ENCODE measurements at regions of chr6 and their contacts with region 1.

Region 1: GRCh38 chr6:108113557-108114519 is 39.3 kb upstream of the OSTM1 start:
- DNase-seq: peak; percentile 80
- H3K4me3 ChIP-seq: peak overlapping the region; percentile 37
- H3K27ac ChIP-seq: no peak overlapping the region
- H3K4me1 ChIP-seq: peaks cover 29% of the 10 kb centered on the region
- H3K27me3 ChIP-seq: peaks cover 80% of the 10 kb centered on the region
- CTCF ChIP-seq: peak; percentile 68

Region 2: DNA sequence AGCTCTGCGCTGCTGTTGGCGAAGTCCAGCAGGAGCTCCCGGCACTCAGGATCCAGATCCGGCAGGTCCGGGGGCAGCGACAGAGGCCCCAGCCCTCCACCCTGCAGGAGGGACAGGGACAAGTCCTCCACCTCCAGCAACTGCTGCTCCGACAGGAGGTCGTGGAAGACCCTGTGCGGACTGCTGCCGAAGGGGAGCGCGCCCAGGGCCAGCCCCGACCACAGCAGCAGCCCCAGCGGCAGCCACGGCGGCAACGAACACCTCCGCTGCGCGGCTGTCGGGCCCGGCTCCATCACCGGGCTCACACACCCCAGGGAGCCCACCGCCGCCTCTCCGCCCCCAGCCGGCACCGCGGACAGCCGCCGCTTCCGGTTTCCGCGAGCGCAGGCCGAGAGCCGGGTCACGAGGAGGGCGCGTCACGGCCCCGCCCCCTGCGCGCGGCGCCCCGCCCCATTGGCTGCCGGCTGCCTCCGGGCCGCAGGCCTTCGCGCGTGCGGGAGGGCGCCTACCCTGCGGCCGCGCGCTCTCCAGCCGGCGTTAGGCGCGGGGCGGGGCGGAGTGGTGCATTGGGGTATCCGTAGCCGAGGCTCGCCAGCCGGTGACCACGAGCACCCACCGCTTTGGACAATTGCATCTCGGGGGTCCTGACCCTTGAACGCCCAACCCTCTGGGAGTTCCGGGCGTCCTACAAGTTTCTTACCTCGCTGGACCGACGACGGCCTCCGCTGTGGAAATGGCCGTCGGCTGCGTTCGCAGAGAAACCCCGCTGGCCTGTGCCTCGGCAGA is 39.3 kb before region 1 on chr6 and contains the start of gene OSTM1:
- CTCF ChIA-PET with region 1: no interaction called
- POLR2A ChIA-PET with region 1: no interaction called
- intact Hi-C with region 1: loop called (anchors 1 kb)
- DNase-seq: peak; percentile 88
- H3K4me3 ChIP-seq: peak within 1 kb of the TSS; percentile 94
- H3K27ac ChIP-seq: peak within 1 kb of the TSS; percentile 33
- H3K4me1 ChIP-seq: no peaks in the 10 kb centered on the region
- H3K27me3 ChIP-seq: no peaks in the 10 kb centered on the region
- CTCF ChIP-seq: no peak
- total RNA-seq, gene OSTM1: 19.7 and 23.8 TPM in 2 replicates

Region 3: DNA sequence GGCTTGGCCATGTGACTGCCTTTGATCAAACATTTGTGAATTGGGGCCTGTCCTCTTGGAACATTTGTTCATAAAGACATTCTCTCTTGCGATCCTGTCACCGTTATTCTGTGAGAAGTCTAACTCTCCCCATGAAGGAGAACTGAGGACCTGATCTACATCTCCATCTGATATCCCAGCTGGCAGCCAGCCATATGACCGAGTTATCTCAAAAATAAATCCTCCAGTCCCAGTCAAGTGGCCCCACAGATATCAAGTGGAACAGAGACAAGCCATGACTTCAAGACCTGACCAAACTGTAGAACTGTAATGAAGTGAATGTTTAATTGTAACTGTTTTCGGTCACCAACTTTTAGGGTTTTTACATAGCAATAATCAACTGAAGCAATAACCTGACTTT is 121.3 kb after region 1 on chr6:
- CTCF ChIA-PET with region 1: no interaction called
- POLR2A ChIA-PET with region 1: no interaction called
- intact Hi-C with region 1: no loop called
- DNase-seq: no peak
- H3K4me3 ChIP-seq: no peak overlapping the region
- H3K27ac ChIP-seq: no peak overlapping the region
- H3K4me1 ChIP-seq: no peaks in the 10 kb centered on the region
- H3K27me3 ChIP-seq: no peaks in the 10 kb centered on the region
- CTCF ChIP-seq: no peak

Region 4: GRCh38 chr6:108260809-108261569 is 147.2 kb after region 1 on chr6 and contains the start of gene SNX3:
- CTCF ChIA-PET with region 1: no interaction called
- POLR2A ChIA-PET with region 1: no interaction called
- intact Hi-C with region 1: loop called (anchors 5 kb)
- DNase-seq: peak; percentile 97
- H3K4me3 ChIP-seq: peak within 1 kb of the TSS; percentile 98
- H3K27ac ChIP-seq: peak within 1 kb of the TSS; percentile 93
- H3K4me1 ChIP-seq: peaks cover 8% of the 10 kb centered on the region
- H3K27me3 ChIP-seq: no peaks in the 10 kb centered on the region
- CTCF ChIP-seq: peak; percentile 25; the same call in 1 of the 2 replicates
- total RNA-seq, gene SNX3: 104 and 105 TPM in 2 replicates

Region 5: DNA sequence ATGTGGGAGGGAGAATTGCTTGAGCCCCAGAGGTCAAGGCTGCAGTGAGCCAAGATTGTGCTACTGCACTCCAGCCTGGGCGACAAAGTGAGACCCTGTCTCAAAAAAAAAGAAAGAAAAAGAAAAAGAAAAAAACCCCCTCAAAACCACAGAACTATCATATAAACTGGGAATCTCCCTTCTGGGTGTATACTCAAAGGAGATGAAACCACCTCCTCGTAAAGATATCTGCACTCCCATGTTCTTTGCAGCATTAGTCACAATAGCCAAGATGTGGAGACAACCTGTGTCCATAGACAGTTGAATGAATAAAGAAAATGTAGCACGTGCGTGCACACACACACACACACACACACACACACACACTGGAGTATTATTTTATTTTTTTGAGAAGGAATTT is 172.5 kb after region 1 on chr6:
- CTCF ChIA-PET with region 1: no interaction called
- POLR2A ChIA-PET with region 1: no interaction called
- intact Hi-C with region 1: no loop called
- DNase-seq: no peak
- H3K4me3 ChIP-seq: no peak overlapping the region
- H3K27ac ChIP-seq: no peak overlapping the region
- H3K4me1 ChIP-seq: no peaks in the 10 kb centered on the region
- H3K27me3 ChIP-seq: no peaks in the 10 kb centered on the region
- CTCF ChIP-seq: no peak

Region 6: DNA sequence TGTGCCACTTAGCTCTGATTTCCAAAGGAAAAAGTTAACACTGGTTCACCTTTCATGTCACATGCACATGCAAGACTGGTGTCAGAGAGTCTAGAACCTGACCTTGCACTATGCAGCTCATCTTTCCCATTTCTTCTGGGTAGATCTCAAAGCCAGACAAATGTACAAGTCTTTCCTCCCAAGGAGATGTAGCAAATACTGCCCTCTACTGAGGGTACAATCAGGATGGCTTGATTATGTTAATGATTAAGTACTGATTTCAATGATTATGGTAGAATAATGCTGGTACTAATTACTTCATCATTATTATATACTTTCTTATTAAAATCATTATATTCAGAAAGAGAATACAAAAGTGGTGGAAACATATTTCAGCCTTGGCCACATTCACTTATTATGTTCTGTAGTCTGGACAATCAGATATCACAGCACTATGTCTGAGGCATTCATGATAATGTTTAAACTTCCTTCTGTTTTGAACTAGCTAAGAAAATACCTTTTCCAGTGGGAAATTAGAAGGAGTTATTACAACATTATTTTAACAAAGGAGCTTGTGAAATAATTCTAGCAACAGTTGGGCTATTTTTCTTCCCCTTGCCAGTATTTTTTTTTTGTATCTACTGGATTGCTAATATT is 378.4 kb after region 1 on chr6:
- CTCF ChIA-PET with region 1: interaction called, 7 read pairs
- POLR2A ChIA-PET with region 1: no interaction called
- intact Hi-C with region 1: loop called (anchors 1 kb)
- DNase-seq: peak; percentile 45
- H3K4me3 ChIP-seq: no peak overlapping the region
- H3K27ac ChIP-seq: no peak overlapping the region
- H3K4me1 ChIP-seq: no peaks in the 10 kb centered on the region
- H3K27me3 ChIP-seq: no peaks in the 10 kb centered on the region
- CTCF ChIP-seq: peak; percentile 75

Region 7: GRCh38 chr6:108526739-108527174 is 412.9 kb after region 1 on chr6:
- CTCF ChIA-PET with region 1: no interaction called
- POLR2A ChIA-PET with region 1: no interaction called
- intact Hi-C with region 1: loop called (anchors 2 kb)
- DNase-seq: peak; percentile 52
- H3K4me3 ChIP-seq: no peak overlapping the region
- H3K27ac ChIP-seq: no peak overlapping the region
- H3K4me1 ChIP-seq: no peaks in the 10 kb centered on the region
- H3K27me3 ChIP-seq: no peaks in the 10 kb centered on the region
- CTCF ChIP-seq: peak; percentile 82

Region 8: GRCh38 chr6:109073344-109074132 is 959.7 kb after region 1 on chr6:
- CTCF ChIA-PET with region 1: no interaction called
- POLR2A ChIA-PET with region 1: no interaction called
- intact Hi-C with region 1: loop called (anchors 10 kb)
- DNase-seq: peak; percentile 77
- H3K4me3 ChIP-seq: no peak overlapping the region
- H3K27ac ChIP-seq: no peak overlapping the region
- H3K4me1 ChIP-seq: peaks cover 3% of the 10 kb centered on the region
- H3K27me3 ChIP-seq: no peaks in the 10 kb centered on the region
- CTCF ChIP-seq: peak; percentile 71

Measured in A673 (cell line).